Activated naive CD4-positive, alpha-beta T cell treated with anti-CD3 and anti-CD28 coated beads for 36 hours (primary cell): ENCODE measurements at regions of chr6 and their contacts with region 1.

Region 1: GRCh38 chr6:111154981-111155380 is 67.7 kb downstream of the SLC16A10 start:
- DNase-seq: peak; percentile 60
- H3K4me3 Mint-ChIP-seq: no peak overlapping the region
- H3K27ac Mint-ChIP-seq: no peak overlapping the region
- H3K4me1 Mint-ChIP-seq: peaks cover 39% of the 10 kb centered on the region
- H3K27me3 Mint-ChIP-seq: no peaks in the 10 kb centered on the region

Region 2: DNA sequence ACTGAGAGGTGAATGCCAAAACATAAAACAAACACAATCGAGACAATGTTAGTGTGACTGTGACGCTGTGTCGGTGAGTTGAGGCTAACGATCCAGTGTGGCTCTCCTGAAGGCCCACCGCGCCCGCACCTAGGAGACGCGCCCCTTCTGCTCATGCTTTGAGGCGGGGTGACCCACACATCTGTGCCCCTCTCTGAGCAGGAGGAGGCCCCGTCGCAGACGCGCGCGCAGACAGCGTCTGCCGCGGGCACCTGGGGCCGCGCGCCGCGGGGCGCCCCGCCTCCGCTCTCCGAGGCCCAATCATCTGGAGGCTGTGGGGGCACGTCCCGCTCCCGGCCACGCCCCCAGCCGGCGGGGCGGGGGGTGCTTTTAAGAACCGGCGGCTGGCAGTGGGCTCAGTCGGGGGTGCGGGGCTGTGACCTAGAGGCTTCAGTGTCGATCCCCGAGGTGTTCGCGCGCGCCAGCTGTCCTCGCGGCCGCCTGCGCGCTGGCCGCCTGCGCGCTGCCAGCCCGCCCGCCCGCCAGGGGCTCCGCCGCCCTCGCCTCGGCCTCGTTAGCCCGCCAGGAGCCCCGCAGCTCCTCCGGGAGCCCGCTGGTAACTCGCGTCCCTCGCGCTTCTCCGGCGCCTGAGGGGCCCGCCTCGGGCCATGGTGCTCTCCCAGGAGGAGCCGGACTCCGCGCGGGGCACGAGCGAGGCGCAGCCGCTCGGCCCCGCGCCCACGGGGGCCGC is 67.7 kb before region 1 on chr6 and contains the start of gene SLC16A10:
- CTCF ChIA-PET with region 1: no interaction called
- intact Hi-C with region 1: loop called (anchors 1 kb)
- DNase-seq: peak; percentile 74
- H3K4me3 Mint-ChIP-seq: peak within 1 kb of the TSS; percentile 89
- H3K27ac Mint-ChIP-seq: peak within 1 kb of the TSS; percentile 76
- H3K4me1 Mint-ChIP-seq: peaks cover 36% of the 10 kb centered on the region
- H3K27me3 Mint-ChIP-seq: no peaks in the 10 kb centered on the region
- total RNA-seq, gene SLC16A10: 6.6 to 8.1 TPM

Region 3: DNA sequence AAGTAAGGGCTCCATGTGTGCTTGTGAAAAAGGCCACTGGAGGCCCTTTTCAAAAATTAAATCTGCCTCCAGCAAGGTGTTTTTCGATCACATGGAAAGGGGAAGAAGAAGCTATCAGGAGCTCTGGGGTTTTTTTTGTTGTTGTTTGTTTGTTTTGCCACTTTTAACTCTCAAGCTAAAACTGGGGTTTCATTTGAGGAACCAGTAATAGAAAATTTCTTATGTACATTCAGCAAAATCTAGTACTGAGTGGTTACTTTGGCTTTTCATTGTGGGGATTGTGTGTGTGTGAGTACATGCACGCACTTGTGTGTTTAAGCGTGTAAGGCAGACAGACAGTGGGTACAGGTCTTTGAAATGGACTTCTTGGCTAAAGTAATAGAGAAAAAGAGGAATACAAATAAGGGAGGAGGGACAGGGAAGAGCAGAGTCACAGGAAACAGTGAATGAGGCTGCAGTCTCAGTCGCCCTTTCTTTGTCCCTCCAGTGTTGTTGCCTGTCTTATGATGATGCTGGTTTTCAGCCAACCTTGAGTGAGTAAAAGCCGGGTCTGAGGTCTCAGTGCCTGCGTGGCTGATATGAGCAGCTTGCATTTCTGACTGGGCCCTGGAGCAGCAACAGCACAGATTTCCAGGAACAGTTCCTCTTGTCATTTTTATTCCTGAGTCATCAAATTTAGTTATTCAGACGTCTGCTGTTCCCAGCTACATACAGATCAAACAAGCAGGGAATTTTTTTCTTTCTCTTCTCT is 41.5 kb before region 1 on chr6:
- CTCF ChIA-PET with region 1: no interaction called
- intact Hi-C with region 1: loop called (anchors 1 kb)
- DNase-seq: peak; percentile 82
- H3K4me3 Mint-ChIP-seq: peak overlapping the region; percentile 65
- H3K27ac Mint-ChIP-seq: peak overlapping the region; percentile 92
- H3K4me1 Mint-ChIP-seq: peaks cover 34% of the 10 kb centered on the region
- H3K27me3 Mint-ChIP-seq: no peaks in the 10 kb centered on the region

Region 4: GRCh38 chr6:111171577-111172400 is 16.8 kb after region 1 on chr6:
- CTCF ChIA-PET with region 1: interaction called, 3 read pairs
- intact Hi-C with region 1: loop called (anchors 2 kb)
- DNase-seq: no peak
- H3K4me3 Mint-ChIP-seq: no peak overlapping the region
- H3K27ac Mint-ChIP-seq: no peak overlapping the region
- H3K4me1 Mint-ChIP-seq: peaks cover 27% of the 10 kb centered on the region
- H3K27me3 Mint-ChIP-seq: no peaks in the 10 kb centered on the region

Region 5: GRCh38 chr6:111280445-111280955 is 125.5 kb after region 1 on chr6:
- CTCF ChIA-PET with region 1: no interaction called
- intact Hi-C with region 1: no loop called
- DNase-seq: no peak
- H3K4me3 Mint-ChIP-seq: no peak overlapping the region
- H3K27ac Mint-ChIP-seq: no peak overlapping the region
- H3K4me1 Mint-ChIP-seq: peaks cover 3% of the 10 kb centered on the region
- H3K27me3 Mint-ChIP-seq: no peaks in the 10 kb centered on the region

Region 6: DNA sequence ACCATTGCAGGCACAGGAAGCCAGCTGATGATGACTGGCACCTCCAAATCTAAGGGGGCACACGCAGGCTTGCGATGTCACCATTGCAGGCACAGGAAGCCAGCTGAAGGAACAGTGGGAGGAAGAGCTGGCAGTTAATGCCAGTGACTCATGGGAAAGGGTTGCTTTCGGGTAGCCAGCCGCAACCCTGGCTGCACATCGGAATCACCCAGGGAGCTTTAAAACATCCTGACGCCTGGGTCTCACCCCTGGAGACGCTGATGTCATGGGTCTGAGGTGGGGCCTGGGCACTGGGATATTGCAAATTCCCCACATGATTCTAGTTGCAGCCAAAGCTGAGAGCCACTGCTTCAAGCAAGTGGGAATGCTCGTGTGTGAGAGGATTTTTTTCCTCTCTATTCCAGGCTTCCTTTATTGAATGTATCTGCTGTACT is 882.8 kb after region 1 on chr6:
- CTCF ChIA-PET with region 1: no interaction called
- intact Hi-C with region 1: loop called (anchors 5 kb)
- DNase-seq: peak; percentile 43
- H3K4me3 Mint-ChIP-seq: no peak overlapping the region
- H3K27ac Mint-ChIP-seq: no peak overlapping the region
- H3K4me1 Mint-ChIP-seq: peaks cover 77% of the 10 kb centered on the region
- H3K27me3 Mint-ChIP-seq: no peaks in the 10 kb centered on the region